Body of pancreas (tissue), 4 donors: ENCODE measurements at regions of chr16 and their contacts with region 1.

Region 1: GRCh38 chr16:31142109-31143010 is 6.8 kb upstream of the PRSS8 start:
- DNase-seq: peak; percentile 99 to 100 (median 100)
- ATAC-seq: peak; percentile 88
- H3K4me3 ChIP-seq: no peak overlapping the region
- H3K27ac ChIP-seq: peak overlapping the region; percentile 83 to 92 (median 92)
- H3K4me1 ChIP-seq: peaks cover 48% of the 10 kb centered on the region
- H3K27me3 ChIP-seq: no peaks in the 10 kb centered on the region
- CTCF ChIP-seq: peak; percentile 95 to 100 (median 97)
- POLR2A ChIP-seq: peak in 2 of 3 donors; percentile 42 to 62

Region 2: DNA sequence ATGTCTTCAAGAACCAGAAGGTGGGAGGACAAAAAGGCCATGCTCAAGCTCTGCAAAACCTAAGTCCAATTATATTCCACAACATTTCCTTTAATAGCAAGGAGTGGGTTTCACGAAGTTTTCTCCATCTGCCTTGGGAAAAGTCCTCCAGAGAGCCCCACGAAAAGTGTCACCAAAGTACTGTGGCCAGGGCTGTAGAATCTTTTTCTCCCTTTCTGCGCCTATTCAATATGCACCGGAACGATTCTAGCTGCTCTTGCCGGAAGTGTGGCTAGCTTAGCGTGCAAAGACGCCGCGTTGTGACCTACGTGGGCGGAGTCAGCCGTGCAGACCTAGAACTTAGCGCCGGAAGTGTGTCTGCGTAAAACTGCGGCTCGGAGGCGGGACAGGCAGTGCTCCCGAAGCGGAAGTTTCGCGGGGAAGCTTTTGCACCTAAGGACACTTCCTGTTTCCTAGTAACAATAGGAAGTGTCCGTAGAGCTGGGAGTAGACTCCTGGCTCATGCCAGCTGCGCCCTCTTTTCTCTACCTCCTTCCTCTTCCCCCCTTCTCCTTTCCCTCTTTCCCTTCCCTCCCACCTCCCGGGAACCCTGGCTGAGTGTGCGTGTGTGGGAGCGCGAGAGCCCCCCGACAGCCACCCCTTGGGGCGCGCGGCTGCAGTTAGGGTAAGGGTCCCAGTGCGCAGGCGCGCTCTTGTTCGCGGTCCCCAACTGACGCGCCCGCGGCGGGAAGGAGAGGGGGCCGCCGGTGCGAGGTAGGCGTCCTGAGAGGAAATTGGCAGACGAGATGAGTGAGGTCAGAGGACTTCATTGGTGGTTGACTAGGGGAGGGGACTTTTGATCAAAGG is 68.2 kb before region 1 on chr16 and contains the starts of genes ZNF646 and ZNF668:
- intact Hi-C with region 1: loop called (anchors 10 kb)
- DNase-seq: peak; percentile 98 to 99 (median 98)
- ATAC-seq: peak; percentile 95
- H3K4me3 ChIP-seq: peak within 1 kb of the TSS; percentile 64 to 99
- H3K27ac ChIP-seq: peak within 1 kb of the TSS; percentile 88 to 93 (median 90)
- H3K4me1 ChIP-seq: peaks cover 25% of the 10 kb centered on the region
- H3K27me3 ChIP-seq: no peaks in the 10 kb centered on the region
- CTCF ChIP-seq: peak in 1 of 7 experiments; percentile 1
- POLR2A ChIP-seq: peak; percentile 54 to 88 (median 86)
- total RNA-seq, gene ZNF646: 12.7 to 14.5 TPM
- total RNA-seq, gene ZNF668: 2.9 to 15.2 TPM

Region 3: DNA sequence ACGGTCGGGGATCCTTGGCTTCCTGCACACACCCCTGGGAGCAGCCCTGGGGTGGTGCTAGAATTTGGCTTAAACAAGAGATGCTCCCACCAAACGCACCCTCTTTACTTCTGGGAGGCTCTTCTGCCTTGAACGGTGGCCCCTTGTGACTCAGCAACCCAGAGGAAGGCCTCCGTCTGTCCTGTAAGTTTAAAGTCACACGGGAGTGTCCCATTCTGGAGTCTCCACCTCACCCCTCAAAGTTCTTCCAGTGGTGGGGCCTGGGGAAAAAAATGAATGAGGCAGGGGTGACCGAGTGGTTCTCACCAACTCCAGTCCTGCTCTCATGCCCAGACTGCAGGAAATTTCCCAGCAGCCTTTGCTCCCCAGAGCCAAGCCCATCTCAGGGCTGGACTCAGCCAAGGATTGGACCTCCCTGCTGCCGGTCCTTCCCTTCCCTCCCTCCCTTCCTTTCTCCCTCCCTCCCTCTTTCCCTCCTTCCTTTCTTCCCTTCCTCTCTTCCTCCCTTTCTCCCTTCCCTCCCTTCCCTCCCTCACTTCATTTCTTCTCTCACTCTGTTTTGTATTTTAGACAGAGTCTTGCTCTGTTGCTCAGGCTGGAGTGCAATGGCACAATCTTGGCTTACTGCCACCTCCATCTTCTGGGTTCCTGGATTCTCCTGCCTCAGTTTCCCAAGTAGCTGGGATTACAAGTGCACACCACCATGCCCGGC is 262.1 kb after region 1 on chr16:
- intact Hi-C with region 1: no loop called
- DNase-seq: no peak
- ATAC-seq: no peak
- H3K4me3 ChIP-seq: no peak overlapping the region
- H3K27ac ChIP-seq: no peak overlapping the region
- H3K4me1 ChIP-seq: no peaks in the 10 kb centered on the region
- H3K27me3 ChIP-seq: no peaks in the 10 kb centered on the region
- CTCF ChIP-seq: no peak
- POLR2A ChIP-seq: no peak